Activated CD8-positive, alpha-beta T cell treated with anti-CD3 and anti-CD28 coated beads, Interleukin-2, amount 10 ng/mL, durations not matched to agents 7 days and 5 days (primary cell): ENCODE measurements at regions of chr12 and their contacts with region 1.

Region 1: DNA sequence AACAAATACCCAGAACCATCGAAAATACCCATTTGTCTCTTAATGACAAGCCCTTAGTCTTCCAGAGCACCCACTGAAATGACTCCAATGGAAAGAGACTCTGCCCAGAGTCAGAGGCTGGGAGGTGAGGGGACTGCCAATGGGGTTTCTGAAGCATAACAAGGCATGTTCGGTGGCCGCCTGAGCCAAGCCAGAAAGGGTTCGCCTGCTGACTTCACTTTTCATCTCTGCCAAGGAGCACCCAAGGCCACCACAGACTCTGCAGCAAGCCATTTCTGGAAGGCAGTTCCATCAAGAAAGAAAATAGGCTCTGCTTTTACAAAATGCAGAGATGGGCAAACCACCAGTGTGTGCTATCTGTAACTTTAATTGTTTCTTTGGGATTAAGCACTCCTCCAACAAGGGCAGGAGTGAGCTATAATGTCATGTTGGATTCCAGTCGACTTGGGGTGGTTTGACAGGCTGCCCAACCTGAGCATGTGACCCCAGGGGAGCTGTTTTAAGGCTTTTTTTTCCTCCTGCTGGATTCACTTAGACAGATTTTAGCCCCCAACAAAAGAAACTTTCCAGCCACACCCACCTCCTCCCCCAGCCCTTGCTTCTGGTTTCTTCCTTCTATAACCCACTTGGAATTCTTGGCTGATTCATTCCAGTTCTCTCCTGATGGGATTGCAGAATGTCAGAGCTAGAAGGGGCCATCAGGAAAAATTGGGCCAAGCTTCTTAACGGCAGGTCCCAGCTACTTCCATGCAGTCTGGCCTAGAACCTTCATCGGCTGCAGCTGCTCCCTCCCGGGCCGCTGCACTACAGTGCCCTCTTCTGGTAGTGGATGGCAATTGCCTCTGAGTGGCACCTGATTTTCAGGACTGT is 24.1 kb downstream of the CKAP4 start:
- DNase-seq: peak; percentile 78
- ATAC-seq: peak; percentile 86
- H3K4me3 Mint-ChIP-seq: no peak overlapping the region
- H3K27ac Mint-ChIP-seq: no peak overlapping the region
- H3K4me1 Mint-ChIP-seq: peaks cover 25% of the 10 kb centered on the region
- H3K27me3 Mint-ChIP-seq: peaks cover 5% of the 10 kb centered on the region

Region 2: DNA sequence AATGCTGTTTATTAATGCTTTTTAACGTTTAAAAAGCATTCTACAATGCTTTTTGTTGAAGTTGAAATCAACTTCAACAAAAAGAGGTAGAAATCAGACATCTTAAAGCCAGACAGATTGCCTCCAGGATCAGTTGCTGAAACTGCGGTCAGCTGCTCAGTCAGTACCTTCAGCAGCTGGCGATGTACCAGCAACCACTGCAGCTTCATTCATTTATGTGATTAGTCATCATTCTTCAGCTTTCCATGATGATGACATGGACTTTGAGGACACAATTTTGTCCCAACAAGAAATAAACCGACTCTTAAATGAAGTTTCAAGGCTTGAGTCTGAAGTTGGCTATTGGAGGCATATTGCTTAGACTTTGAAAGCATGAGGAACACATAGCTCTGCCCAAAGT is 53.4 kb before region 1 on chr12:
- CTCF ChIA-PET with region 1: no interaction called
- POLR2A ChIA-PET with region 1: no interaction called
- DNase-seq: no peak
- ATAC-seq: no peak
- H3K4me3 Mint-ChIP-seq: no peak overlapping the region
- H3K27ac Mint-ChIP-seq: no peak overlapping the region
- H3K4me1 Mint-ChIP-seq: no peaks in the 10 kb centered on the region
- H3K27me3 Mint-ChIP-seq: peaks cover 33% of the 10 kb centered on the region

Region 3: GRCh38 chr12:106192659-106193393 is 30.9 kb before region 1 on chr12:
- CTCF ChIA-PET with region 1: no interaction called
- POLR2A ChIA-PET with region 1: no interaction called
- DNase-seq: no peak
- ATAC-seq: no peak
- H3K4me3 Mint-ChIP-seq: no peak overlapping the region
- H3K27ac Mint-ChIP-seq: no peak overlapping the region
- H3K4me1 Mint-ChIP-seq: no peaks in the 10 kb centered on the region
- H3K27me3 Mint-ChIP-seq: peaks cover 11% of the 10 kb centered on the region

Region 4: DNA sequence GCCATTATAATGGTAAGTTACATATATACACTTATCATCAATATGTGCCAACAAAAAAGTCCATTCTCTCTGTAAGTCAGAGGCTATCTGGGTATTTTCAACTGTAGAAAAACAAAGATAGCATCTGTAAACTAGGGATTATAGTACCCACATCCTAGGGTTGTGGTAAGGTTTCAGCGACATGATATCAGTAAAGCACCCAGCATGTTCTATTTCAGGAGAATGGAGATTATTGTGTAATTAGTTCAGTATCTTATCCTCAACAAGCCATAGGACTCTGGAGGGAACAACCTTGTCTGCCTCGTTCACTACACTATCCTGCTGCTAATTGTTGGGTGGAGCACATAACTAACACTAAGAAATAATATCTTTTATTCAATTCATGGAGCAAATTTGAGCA is 43.8 kb after region 1 on chr12:
- CTCF ChIA-PET with region 1: interaction called, 10 read pairs
- POLR2A ChIA-PET with region 1: no interaction called
- DNase-seq: no peak
- ATAC-seq: peak; percentile 51
- H3K4me3 Mint-ChIP-seq: no peak overlapping the region
- H3K27ac Mint-ChIP-seq: no peak overlapping the region
- H3K4me1 Mint-ChIP-seq: peaks cover 24% of the 10 kb centered on the region
- H3K27me3 Mint-ChIP-seq: peaks cover 28% of the 10 kb centered on the region

Region 5: GRCh38 chr12:106296193-106296877 is 72.6 kb after region 1 on chr12:
- CTCF ChIA-PET with region 1: interaction called, 23 read pairs
- POLR2A ChIA-PET with region 1: interaction called, 3 read pairs
- DNase-seq: no peak
- ATAC-seq: no peak
- H3K4me3 Mint-ChIP-seq: no peak overlapping the region
- H3K27ac Mint-ChIP-seq: no peak overlapping the region
- H3K4me1 Mint-ChIP-seq: peaks cover 18% of the 10 kb centered on the region
- H3K27me3 Mint-ChIP-seq: peaks cover 2% of the 10 kb centered on the region

Region 6: DNA sequence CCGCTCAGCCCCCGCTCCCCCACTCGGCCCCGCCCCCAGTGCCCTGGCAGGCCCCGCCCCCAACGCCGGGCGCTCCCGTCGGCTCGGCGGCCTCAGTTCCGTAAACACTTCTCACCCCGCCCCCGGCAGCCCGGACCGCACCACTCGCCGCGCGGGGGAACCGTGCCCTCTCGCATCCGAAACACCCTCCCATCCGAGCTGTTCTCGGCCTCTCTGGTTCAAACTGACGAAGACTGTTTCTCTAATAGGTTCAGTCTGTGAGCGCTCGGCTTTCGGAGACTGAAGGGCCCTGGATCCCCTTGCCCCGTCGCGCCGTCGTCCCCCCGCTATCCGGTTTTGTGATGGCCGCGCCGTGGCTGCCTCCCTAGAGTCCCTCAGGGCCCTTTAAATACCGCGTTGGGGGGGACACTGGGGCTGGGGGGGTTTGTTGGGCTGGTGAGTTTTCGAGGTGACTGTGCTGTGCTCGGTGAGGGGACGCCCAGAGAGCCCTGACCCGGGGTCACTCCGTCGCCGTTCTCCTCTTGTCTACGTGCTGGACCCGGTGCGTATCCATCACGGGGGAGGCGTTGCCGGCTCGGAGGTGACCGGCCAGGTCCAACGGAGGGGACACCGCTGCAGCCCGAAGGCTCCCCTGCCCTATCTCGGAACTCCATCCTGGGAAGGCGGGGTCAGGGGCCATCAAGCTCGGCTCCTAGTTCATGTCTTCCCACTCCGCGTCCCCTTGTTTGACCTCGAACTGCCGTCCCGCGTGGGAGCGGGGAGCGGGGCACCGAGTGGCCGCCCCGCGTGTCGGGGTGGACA is 78.9 kb after region 1 on chr12 and contains the start of gene TCP11L2:
- CTCF ChIA-PET with region 1: interaction called, 23 read pairs
- POLR2A ChIA-PET with region 1: interaction called, 3 read pairs
- DNase-seq: peak; percentile 91
- ATAC-seq: peak; percentile 75
- H3K4me3 Mint-ChIP-seq: peak within 1 kb of the TSS; percentile 87
- H3K27ac Mint-ChIP-seq: peak within 1 kb of the TSS; percentile 100
- H3K4me1 Mint-ChIP-seq: peaks cover 32% of the 10 kb centered on the region
- H3K27me3 Mint-ChIP-seq: no peaks in the 10 kb centered on the region
- total RNA-seq, gene TCP11L2: 5.9 to 6.4 TPM